CD8-positive, alpha-beta T cell (primary cell): ENCODE measurements at regions of chr6 and their contacts with region 1.

Region 1: DNA sequence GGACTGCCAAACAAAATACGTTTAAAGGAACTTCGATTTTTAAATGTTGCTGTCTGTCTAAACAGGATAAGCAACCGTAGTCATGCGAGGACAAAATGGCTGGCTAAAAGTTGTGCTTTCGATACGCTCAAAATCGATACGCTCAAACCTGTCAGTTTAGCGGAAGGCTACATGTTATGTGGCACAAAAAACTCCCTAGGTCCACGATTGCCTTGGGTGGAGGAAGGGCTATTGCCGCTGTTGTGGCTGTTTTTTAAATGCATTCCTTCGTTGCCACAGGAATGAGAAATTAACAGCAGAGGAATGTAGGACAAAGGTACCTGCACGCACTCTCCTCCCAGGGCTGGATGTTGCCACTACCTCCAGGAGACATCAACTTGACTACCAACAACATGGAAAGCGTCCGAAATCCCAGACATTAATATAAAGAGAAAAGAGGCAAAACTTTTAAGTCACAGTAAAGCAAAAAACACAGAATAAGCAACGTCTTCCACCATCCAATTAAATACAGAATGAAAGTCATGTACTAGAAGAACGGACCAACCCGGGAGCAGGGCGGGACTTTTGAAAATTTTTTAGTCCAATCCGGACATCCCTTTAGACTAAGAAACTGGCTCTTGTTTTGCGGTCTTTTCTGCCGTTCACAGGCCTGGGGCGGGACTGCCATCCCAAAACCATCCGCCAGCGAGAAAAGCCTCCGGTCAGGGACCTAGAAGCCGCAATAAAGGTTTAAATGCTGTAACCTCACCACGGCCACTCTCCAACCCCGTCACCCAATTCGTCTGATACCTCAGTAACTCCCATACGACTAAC is 32.2 kb upstream of the HFE start:
- DNase-seq: peak; percentile 71 to 94 (median 88)
- ATAC-seq: peak; percentile 72
- H3K4me3 ChIP-seq: peak overlapping the region; percentile 75 to 85
- H3K4me3 Mint-ChIP-seq: peak overlapping the region; percentile 96
- H3K27ac ChIP-seq: peak overlapping the region; percentile 85 to 96
- H3K27ac Mint-ChIP-seq: peak overlapping the region; percentile 99
- H3K4me1 ChIP-seq: peaks cover 17% of the 10 kb centered on the region
- H3K4me1 Mint-ChIP-seq: peaks cover 23% of the 10 kb centered on the region
- H3K27me3 ChIP-seq: no peaks in the 10 kb centered on the region
- H3K27me3 Mint-ChIP-seq: no peaks in the 10 kb centered on the region
- CTCF ChIP-seq: no peak

Region 2: GRCh38 chr6:26009817-26010216 is 45.2 kb before region 1 on chr6:
- CTCF ChIA-PET with region 1: no interaction called
- POLR2A ChIA-PET with region 1: no interaction called
- intact Hi-C with region 1: no loop called
- DNase-seq: no peak
- ATAC-seq: no peak
- H3K4me3 ChIP-seq: no peak overlapping the region
- H3K4me3 Mint-ChIP-seq: no peak overlapping the region
- H3K27ac ChIP-seq: no peak overlapping the region
- H3K27ac Mint-ChIP-seq: no peak overlapping the region
- H3K4me1 ChIP-seq: no peaks in the 10 kb centered on the region
- H3K4me1 Mint-ChIP-seq: no peaks in the 10 kb centered on the region
- H3K27me3 ChIP-seq: no peaks in the 10 kb centered on the region
- H3K27me3 Mint-ChIP-seq: no peaks in the 10 kb centered on the region
- CTCF ChIP-seq: no peak

Region 3: DNA sequence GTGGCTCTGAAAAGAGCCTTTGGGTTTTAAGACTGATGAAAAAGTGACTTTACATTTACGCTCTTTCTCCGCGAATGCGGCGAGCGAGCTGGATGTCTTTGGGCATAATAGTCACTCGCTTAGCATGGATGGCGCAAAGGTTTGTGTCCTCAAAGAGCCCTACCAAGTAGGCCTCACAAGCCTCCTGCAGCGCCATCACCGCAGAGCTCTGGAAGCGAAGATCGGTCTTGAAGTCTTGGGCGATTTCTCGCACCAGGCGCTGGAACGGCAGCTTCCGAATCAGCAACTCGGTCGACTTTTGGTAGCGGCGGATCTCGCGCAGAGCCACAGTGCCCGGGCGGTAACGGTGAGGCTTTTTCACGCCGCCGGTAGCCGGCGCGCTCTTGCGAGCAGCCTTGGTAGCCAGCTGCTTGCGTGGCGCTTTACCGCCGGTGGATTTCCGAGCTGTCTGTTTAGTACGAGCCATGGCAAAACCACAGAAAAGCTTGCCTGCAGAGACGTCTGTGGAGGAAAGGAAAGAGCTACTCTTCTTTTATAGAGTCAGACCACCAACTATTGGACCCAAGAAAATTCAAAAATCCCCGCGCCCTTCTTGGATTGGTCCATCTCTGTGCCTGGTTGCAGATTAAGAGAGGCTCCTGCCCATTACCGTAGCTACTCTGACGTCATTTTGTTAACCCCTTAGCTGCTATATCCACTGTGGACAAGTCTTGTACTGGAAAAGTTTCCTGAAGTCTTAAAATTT is 23.3 kb before region 1 on chr6:
- CTCF ChIA-PET with region 1: interaction called, 3 read pairs
- POLR2A ChIA-PET with region 1: interaction called, 70 read pairs
- intact Hi-C with region 1: loop called (anchors 1 kb)
- DNase-seq: peak; percentile 79 to 93 (median 88)
- ATAC-seq: peak; percentile 63
- H3K4me3 ChIP-seq: peak overlapping the region; percentile 68 to 71
- H3K4me3 Mint-ChIP-seq: peak overlapping the region; percentile 93
- H3K27ac ChIP-seq: peak overlapping the region; percentile 76 to 79
- H3K27ac Mint-ChIP-seq: peak overlapping the region; percentile 96
- H3K4me1 ChIP-seq: peaks cover 31% of the 10 kb centered on the region
- H3K4me1 Mint-ChIP-seq: peaks cover 46% of the 10 kb centered on the region
- H3K27me3 ChIP-seq: no peaks in the 10 kb centered on the region
- H3K27me3 Mint-ChIP-seq: no peaks in the 10 kb centered on the region
- CTCF ChIP-seq: no peak

Region 4: DNA sequence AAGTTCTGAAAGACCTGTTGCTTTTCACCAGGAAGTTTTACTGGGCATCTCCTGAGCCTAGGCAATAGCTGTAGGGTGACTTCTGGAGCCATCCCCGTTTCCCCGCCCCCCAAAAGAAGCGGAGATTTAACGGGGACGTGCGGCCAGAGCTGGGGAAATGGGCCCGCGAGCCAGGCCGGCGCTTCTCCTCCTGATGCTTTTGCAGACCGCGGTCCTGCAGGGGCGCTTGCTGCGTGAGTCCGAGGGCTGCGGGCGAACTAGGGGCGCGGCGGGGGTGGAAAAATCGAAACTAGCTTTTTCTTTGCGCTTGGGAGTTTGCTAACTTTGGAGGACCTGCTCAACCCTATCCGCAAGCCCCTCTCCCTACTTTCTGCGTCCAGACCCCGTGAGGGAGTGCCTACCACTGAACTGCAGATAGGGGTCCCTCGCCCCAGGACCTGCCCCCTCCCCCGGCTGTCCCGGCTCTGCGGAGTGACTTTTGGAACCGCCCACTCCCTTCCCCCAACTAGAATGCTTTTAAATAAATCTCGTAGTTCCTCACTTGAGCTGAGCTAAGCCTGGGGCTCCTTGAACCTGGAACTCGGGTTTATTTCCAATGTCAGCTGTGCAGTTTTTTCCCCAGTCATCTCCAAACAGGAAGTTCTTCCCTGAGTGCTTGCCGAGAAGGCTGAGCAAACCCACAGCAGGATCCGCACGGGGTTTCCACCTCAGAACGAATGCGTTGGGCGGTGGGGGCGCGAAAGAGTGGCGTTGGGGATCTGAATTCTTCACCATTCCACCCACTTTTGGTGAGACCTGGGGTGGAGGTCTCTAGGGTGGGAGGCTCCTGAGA is 32.4 kb after region 1 on chr6 and contains the start of gene HFE:
- CTCF ChIA-PET with region 1: interaction called, 666 read pairs
- POLR2A ChIA-PET with region 1: interaction called, 13 read pairs
- intact Hi-C with region 1: no loop called
- DNase-seq: peak in 7 of 9 experiments; percentile 10 to 59 (median 40)
- ATAC-seq: peak; percentile 35
- H3K4me3 ChIP-seq: peak within 1 kb of the TSS; percentile 75 to 84
- H3K4me3 Mint-ChIP-seq: peak within 1 kb of the TSS; percentile 88
- H3K27ac ChIP-seq: peak within 1 kb of the TSS; percentile 56 to 60
- H3K27ac Mint-ChIP-seq: peak within 1 kb of the TSS; percentile 81
- H3K4me1 ChIP-seq: peaks cover 27% of the 10 kb centered on the region
- H3K4me1 Mint-ChIP-seq: peaks cover 36% of the 10 kb centered on the region
- H3K27me3 ChIP-seq: peaks cover 0 to 2% of the 10 kb centered on the region in 2 experiments
- H3K27me3 Mint-ChIP-seq: no peaks in the 10 kb centered on the region
- CTCF ChIP-seq: no peak
- total RNA-seq, gene HFE: 0.30 to 0.44 TPM

Region 5: DNA sequence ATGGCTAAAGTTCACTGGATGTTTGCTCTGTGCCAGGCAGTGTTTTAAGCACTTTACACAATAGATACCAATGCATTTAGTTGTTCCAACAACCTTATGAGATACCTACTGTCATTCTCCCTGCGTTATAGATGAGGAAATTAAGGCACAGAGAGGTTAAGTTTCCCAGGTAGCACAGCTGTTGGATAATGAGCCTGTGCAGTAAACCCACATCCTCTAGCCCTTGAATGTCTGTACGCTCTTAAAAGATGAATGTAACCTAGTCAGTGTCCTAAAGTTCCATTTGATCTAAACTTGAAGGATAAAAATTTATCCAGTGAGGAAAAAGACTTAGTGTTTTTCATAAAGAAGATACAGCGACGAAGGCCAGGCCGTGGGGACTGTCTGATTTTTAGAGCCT is 60.2 kb after region 1 on chr6:
- CTCF ChIA-PET with region 1: no interaction called
- POLR2A ChIA-PET with region 1: no interaction called
- intact Hi-C with region 1: no loop called
- DNase-seq: no peak
- ATAC-seq: no peak
- H3K4me3 ChIP-seq: no peak overlapping the region
- H3K4me3 Mint-ChIP-seq: no peak overlapping the region
- H3K27ac ChIP-seq: no peak overlapping the region
- H3K27ac Mint-ChIP-seq: no peak overlapping the region
- H3K4me1 ChIP-seq: peaks cover 6% of the 10 kb centered on the region
- H3K4me1 Mint-ChIP-seq: peaks cover 8% of the 10 kb centered on the region
- H3K27me3 ChIP-seq: no peaks in the 10 kb centered on the region
- H3K27me3 Mint-ChIP-seq: no peaks in the 10 kb centered on the region
- CTCF ChIP-seq: no peak